Activated CD4-positive, alpha-beta memory T cell treated with anti-CD3 and anti-CD28 coated beads, Interleukin-2, amount 10 ng/mL, durations not matched to agents 7 days and 5 days (primary cell): ENCODE measurements at regions of chr2 and their contacts with region 1.

Region 1: DNA sequence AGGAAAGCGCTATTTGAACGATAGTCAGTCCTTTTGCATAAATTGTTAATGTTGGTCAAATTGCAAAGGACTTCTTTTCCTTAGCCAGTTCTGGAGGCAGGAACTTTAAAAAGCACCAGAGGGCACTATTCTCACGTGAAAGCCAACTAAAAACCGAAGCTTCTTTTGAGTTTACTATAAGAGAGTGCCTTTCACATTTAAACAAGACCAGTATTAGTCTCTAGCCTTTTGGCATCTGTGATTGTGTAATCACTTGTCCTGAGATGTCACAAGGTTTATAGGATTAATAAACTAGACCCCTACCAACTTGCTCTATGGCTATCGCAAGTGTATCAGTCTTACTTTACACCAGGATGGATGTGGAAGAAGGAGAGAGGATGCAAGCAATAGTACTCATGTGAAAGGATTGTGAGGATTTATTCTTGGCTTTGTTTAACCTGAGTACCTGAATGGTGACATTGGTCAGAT is 14.4 kb upstream of the STAT4 start:
- DNase-seq: no peak
- H3K4me3 Mint-ChIP-seq: no peak overlapping the region
- H3K27ac Mint-ChIP-seq: no peak overlapping the region
- H3K4me1 Mint-ChIP-seq: peaks cover 12% of the 10 kb centered on the region
- H3K27me3 Mint-ChIP-seq: peaks cover 11% of the 10 kb centered on the region

Region 2: GRCh38 chr2:191051825-191052778 is 113.1 kb before region 1 on chr2:
- CTCF ChIA-PET with region 1: interaction called, 512 read pairs
- POLR2A ChIA-PET with region 1: interaction called, 4 read pairs
- DNase-seq: no peak
- H3K4me3 Mint-ChIP-seq: no peak overlapping the region
- H3K27ac Mint-ChIP-seq: no peak overlapping the region
- H3K4me1 Mint-ChIP-seq: peaks cover 28% of the 10 kb centered on the region
- H3K27me3 Mint-ChIP-seq: no peaks in the 10 kb centered on the region

Region 3: DNA sequence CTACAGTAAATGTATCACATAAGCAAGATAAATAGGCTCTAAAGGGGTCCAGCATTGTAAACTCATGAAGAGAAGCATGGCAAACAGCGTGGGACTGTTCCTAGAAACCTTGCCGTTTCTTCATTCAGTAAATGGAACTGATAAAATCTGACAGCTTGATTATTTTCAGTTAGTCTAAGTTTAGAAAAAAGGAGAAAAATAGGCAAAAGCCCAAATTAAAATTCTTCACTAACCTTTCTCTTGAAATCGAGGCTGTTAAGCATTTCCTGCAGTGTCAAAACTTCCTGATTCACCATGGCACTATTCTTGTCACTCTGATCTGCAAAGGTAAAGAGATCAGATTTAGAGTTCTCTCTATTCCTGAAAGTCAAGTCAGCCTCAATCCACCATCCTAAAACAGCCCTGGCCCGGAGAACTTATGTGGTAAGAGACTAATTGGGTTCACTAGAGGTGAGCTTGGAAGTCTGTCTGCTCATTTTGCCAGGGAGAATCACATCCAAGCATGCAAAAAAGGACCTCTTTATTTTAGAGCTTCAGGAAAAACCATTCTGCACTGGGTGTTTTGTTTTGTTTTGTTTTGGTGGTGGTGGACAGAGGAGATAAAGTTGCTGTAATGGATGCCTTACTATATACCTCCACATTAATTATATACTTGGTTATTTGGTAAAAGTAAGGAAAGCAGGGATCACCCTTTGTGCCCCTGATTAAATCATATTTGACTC is 98.9 kb before region 1 on chr2:
- CTCF ChIA-PET with region 1: no interaction called
- POLR2A ChIA-PET with region 1: no interaction called
- DNase-seq: peak; percentile 23
- H3K4me3 Mint-ChIP-seq: peak overlapping the region; percentile 80
- H3K27ac Mint-ChIP-seq: peak overlapping the region; percentile 84
- H3K4me1 Mint-ChIP-seq: peaks cover 78% of the 10 kb centered on the region
- H3K27me3 Mint-ChIP-seq: no peaks in the 10 kb centered on the region

Region 4: DNA sequence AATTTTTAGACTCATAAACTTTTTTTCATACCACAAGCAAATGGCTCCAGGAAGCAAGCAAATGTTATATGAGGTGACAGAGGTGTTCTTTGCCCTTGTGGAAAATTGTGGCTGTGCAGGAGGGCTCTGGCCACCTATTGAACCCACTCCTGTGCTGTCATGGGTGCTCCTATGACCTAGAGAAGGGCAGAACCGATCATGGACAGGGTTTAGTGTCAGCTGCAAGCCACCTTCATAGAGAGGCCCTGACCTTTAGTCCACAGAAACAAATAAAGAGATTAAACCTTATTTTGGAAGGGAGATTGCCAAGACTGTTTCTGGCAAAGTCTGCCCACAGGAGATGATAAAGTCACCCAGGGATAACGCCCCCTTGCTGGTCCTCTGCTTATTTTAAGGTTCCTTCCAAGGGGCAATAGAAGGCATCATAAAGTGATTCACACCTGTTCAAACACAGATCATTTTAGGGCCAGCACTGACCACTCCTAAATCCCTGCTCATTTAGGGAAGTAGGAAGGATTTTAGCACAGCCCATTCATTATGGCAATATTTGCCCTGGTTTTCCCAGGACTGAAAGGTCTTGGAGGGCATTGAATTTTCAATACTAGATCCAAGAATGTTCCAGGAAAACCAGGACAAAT is 11.7 kb after region 1 on chr2:
- CTCF ChIA-PET with region 1: interaction called, 22 read pairs
- POLR2A ChIA-PET with region 1: no interaction called
- DNase-seq: no peak
- H3K4me3 Mint-ChIP-seq: no peak overlapping the region
- H3K27ac Mint-ChIP-seq: no peak overlapping the region
- H3K4me1 Mint-ChIP-seq: peaks cover 23% of the 10 kb centered on the region
- H3K27me3 Mint-ChIP-seq: no peaks in the 10 kb centered on the region

Region 5: GRCh38 chr2:191302459-191303139 is 137.4 kb after region 1 on chr2:
- CTCF ChIA-PET with region 1: interaction called, 11 read pairs
- POLR2A ChIA-PET with region 1: no interaction called
- DNase-seq: no peak
- H3K4me3 Mint-ChIP-seq: no peak overlapping the region
- H3K27ac Mint-ChIP-seq: no peak overlapping the region
- H3K4me1 Mint-ChIP-seq: no peaks in the 10 kb centered on the region
- H3K27me3 Mint-ChIP-seq: peaks cover 2% of the 10 kb centered on the region

Region 6: GRCh38 chr2:191521608-191522208 is 356.5 kb after region 1 on chr2:
- CTCF ChIA-PET with region 1: interaction called, 24 read pairs
- POLR2A ChIA-PET with region 1: no interaction called
- DNase-seq: no peak
- H3K4me3 Mint-ChIP-seq: no peak overlapping the region
- H3K27ac Mint-ChIP-seq: no peak overlapping the region
- H3K4me1 Mint-ChIP-seq: no peaks in the 10 kb centered on the region
- H3K27me3 Mint-ChIP-seq: peaks cover 15% of the 10 kb centered on the region